ENCODE measurements at regions of chr6 and their contacts with region 1.

Region 1: GRCh38 chr6:70706491-70707123 is 38.9 kb downstream of the SMAP1 start:
- DNase-seq: no peak
- ATAC-seq: no peak
- H3K4me3 ChIP-seq: no peak overlapping the region
- H3K27ac ChIP-seq: no peak overlapping the region
- H3K4me1 ChIP-seq: peaks cover 3 to 16% of the 10 kb centered on the region in 2 donors
- H3K27me3 ChIP-seq: no peaks in the 10 kb centered on the region
- CTCF ChIP-seq: peak; percentile 54 to 74 (median 67)
- POLR2A ChIP-seq: no peak

Region 2: DNA sequence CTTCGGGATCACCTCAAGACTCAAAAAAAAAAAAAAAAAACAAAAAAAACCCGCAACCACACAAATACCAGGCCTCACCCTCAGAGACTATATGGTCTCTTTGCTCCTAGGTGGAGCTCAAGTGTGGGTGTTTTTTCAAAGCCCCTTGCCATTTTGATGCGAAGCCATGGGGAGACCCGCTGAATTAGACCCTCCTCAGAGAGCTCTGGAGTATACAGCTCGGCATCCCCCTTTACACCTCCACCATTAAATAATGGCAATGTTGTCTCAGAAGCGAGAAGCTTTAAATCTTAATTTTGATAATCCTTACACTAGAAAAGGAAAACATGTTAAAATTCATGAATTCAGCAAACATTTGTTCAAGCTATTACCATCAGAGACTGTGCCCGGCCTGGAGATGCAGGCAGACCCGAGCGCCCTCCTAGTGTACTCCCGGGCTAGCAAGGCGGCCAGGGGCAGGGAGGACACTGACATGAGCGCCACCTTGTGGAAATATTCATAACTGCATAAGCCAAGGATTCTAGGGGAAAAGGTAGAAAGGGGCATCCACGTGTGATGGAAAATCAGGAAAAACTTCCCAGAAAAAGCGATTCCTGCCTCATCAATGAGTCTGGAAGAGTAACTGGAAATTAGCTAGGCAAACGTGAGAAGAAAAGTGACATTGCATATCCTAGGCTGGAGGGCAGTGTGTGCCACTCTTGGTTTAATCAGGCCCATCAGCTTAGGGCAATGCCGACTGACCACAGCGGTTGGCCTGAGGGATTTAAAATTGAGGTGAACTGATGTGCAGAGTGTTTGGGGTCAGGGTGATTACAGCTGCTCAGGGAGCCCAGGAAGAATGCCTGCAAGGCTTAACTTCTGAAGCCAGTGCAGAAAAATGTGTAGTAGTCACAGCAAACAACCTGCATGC is 177.7 kb after region 1 on chr6:
- in situ Hi-C with region 1: loop called (anchors 5 kb)
- intact Hi-C with region 1: loop called (anchors 1 kb)
- DNase-seq: peak; percentile 30 to 39
- ATAC-seq: peak; percentile 57 to 88
- H3K4me3 ChIP-seq: no peak overlapping the region
- H3K27ac ChIP-seq: no peak overlapping the region
- H3K4me1 ChIP-seq: no peaks in the 10 kb centered on the region
- H3K27me3 ChIP-seq: no peaks in the 10 kb centered on the region
- CTCF ChIP-seq: peak; percentile 81 to 95 (median 87)
- POLR2A ChIP-seq: no peak

Region 3: GRCh38 chr6:70955441-70956190 is 249.0 kb after region 1 on chr6:
- in situ Hi-C with region 1: no loop called
- intact Hi-C with region 1: loop called (anchors 5 kb)
- DNase-seq: peak; percentile 51 to 62
- ATAC-seq: peak; percentile 84 to 90
- H3K4me3 ChIP-seq: peak overlapping the region; percentile 55 to 78 (median 64)
- H3K27ac ChIP-seq: no peak overlapping the region
- H3K4me1 ChIP-seq: peaks cover 3 to 21% of the 10 kb centered on the region in 2 donors
- H3K27me3 ChIP-seq: peaks cover 26 to 38% (median 36%) of the 10 kb centered on the region in 3 donors
- CTCF ChIP-seq: peak; percentile 47 to 85 (median 81)
- POLR2A ChIP-seq: no peak

Measured in gastrocnemius medialis (tissue), 4 donors.